Activated CD4-positive, alpha-beta T cell treated with anti-CD3 and anti-CD28 coated beads, Interleukin-2, amount 10 ng/mL, durations not matched to agents 24 days and 14 days (primary cell): ENCODE measurements at regions of chr12 and their contacts with region 1.

Region 1: GRCh38 chr12:82685790-82686167 is 927 bp upstream of the TMTC2 start:
- DNase-seq: peak; percentile 97
- H3K4me3 Mint-ChIP-seq: peak overlapping the region; percentile 97
- H3K27ac Mint-ChIP-seq: peak overlapping the region; percentile 89
- H3K4me1 Mint-ChIP-seq: peaks cover 22% of the 10 kb centered on the region
- H3K27me3 Mint-ChIP-seq: peaks cover 24% of the 10 kb centered on the region

Region 2: GRCh38 chr12:81942594-81942993 is 743.2 kb before region 1 on chr12:
- intact Hi-C with region 1: no loop called
- DNase-seq: peak; percentile 74
- H3K4me3 Mint-ChIP-seq: peak overlapping the region; percentile 58
- H3K27ac Mint-ChIP-seq: peak overlapping the region; percentile 66
- H3K4me1 Mint-ChIP-seq: peaks cover 26% of the 10 kb centered on the region
- H3K27me3 Mint-ChIP-seq: no peaks in the 10 kb centered on the region

Region 3: DNA sequence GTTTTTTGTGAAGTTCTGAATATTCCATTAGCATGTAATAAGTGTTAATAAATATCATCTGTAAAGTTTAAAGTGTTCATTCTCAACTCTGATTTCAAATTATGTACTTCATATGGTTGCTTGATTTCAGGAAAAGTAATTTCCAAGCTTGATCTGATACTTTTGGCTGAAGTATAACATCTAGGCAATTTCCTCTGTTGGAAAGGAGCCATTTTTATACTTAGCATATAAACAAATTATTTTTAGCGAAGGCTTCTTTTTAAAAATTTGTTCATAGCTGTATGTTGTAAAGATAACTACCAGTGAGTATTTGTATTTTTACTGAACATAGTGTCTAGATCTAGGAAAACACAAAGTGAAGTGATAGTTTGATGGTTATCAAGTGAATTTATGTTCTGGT is 152.4 kb before region 1 on chr12:
- intact Hi-C with region 1: loop called (anchors 10 kb)
- DNase-seq: no peak
- H3K4me3 Mint-ChIP-seq: no peak overlapping the region
- H3K27ac Mint-ChIP-seq: no peak overlapping the region
- H3K4me1 Mint-ChIP-seq: no peaks in the 10 kb centered on the region
- H3K27me3 Mint-ChIP-seq: peaks cover 2% of the 10 kb centered on the region

Region 4: GRCh38 chr12:82766031-82766705 is 80.4 kb after region 1 on chr12:
- intact Hi-C with region 1: loop called (anchors 5 kb)
- DNase-seq: no peak
- H3K4me3 Mint-ChIP-seq: no peak overlapping the region
- H3K27ac Mint-ChIP-seq: no peak overlapping the region
- H3K4me1 Mint-ChIP-seq: no peaks in the 10 kb centered on the region
- H3K27me3 Mint-ChIP-seq: no peaks in the 10 kb centered on the region

Region 5: GRCh38 chr12:82817368-82817767 is 131.6 kb after region 1 on chr12:
- intact Hi-C with region 1: no loop called
- DNase-seq: no peak
- H3K4me3 Mint-ChIP-seq: no peak overlapping the region
- H3K27ac Mint-ChIP-seq: no peak overlapping the region
- H3K4me1 Mint-ChIP-seq: no peaks in the 10 kb centered on the region
- H3K27me3 Mint-ChIP-seq: no peaks in the 10 kb centered on the region

Region 6: DNA sequence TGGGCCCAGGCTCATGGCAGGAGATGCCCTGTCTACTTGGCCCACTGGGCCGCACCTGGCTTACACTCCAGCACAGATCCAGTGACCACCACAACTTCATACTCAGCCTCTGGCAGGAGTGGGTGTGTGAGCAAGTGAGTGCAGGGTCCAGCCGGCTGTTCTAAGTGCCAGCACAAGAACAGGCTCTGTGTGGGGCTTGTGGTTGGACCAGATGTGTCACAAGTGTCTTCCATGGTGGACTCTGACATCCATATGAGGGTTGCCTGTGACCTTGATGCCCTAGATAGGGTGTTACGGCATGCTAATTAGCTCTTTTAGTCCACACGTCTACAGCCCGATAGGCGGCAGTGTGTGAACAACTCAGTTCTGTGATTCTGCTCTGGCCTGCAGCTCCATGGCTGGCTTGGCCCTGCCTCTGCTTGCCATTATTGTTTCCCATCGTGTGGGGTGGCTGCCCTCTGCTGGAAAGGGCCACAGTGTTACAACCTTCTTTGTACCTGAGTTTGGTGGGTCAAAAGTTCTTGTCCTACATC is 1137.7 kb after region 1 on chr12:
- intact Hi-C with region 1: loop called (anchors 5 kb)
- DNase-seq: peak; percentile 76
- H3K4me3 Mint-ChIP-seq: no peak overlapping the region
- H3K27ac Mint-ChIP-seq: no peak overlapping the region
- H3K4me1 Mint-ChIP-seq: no peaks in the 10 kb centered on the region
- H3K27me3 Mint-ChIP-seq: no peaks in the 10 kb centered on the region